GM12878 (cell line): ENCODE measurements at regions of chr1 and their contacts with region 1.

Region 1: GRCh38 chr1:52592637-52593323 is 9.4 kb upstream of the GPX7 start:
- DNase-seq: no peak
- ATAC-seq: no peak
- H3K4me3 ChIP-seq: no peak overlapping the region
- H3K27ac ChIP-seq: no peak overlapping the region
- H3K4me1 ChIP-seq: no peaks in the 10 kb centered on the region; the same call in 1 of the 2 replicates
- H3K27me3 ChIP-seq: no peaks in the 10 kb centered on the region; a peak in 2 of 4 replicates
- CTCF ChIP-seq: no peak
- EP300 ChIP-seq: no peak
- POLR2A ChIP-seq: no peak
- RAD21 ChIP-seq: no peak

Region 2: GRCh38 chr1:52334906-52335528 is 257.8 kb before region 1 on chr1:
- CTCF ChIA-PET with region 1: no interaction called
- POLR2A ChIA-PET with region 1: no interaction called
- RAD21 ChIA-PET with region 1: no interaction called
- SMC1A ChIA-PET with region 1: no interaction called
- in situ Hi-C with region 1: no loop called
- intact Hi-C with region 1: no loop called
- DNase-seq: no peak
- ATAC-seq: no peak
- H3K4me3 ChIP-seq: no peak overlapping the region
- H3K27ac ChIP-seq: no peak overlapping the region
- H3K4me1 ChIP-seq: no peaks in the 10 kb centered on the region
- H3K27me3 ChIP-seq: no peaks in the 10 kb centered on the region; a peak in 1 of 4 replicates
- CTCF ChIP-seq: no peak
- EP300 ChIP-seq: no peak
- POLR2A ChIP-seq: no peak
- RAD21 ChIP-seq: no peak

Region 3: DNA sequence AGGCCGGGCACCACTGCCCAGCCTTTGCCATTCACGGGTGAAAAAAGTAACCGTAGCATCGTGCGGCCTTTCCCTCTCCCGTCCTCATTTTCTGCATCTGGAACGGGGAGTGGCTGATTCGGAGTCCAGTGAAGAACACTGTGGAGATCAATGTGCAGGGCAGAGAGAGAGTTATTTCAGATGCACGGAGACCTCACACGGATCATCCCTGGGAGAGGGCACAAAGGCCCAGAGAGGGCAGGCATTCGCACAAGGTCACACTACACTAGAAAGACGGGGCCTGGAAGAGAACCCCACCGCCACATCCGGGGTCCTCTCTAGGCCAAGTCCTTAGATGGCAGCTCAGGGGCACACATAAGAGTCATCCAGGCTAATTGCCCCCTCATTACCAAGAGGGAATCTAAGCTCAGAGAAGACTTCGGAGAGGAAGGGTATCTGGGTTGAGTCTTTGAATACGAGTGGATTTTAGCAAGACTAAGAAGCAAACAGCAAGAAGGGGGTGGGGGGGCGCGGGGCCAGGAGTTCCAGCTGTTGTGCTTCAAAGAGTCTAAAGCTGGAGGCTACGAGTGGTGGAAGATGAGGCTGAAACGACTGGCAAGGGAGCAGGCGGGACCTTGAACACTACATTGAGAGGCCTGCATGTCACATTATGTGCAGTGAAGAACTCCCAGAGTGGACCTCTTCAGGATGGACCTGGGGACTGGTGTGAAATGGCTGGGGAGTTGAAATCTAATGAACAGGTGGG is 10.2 kb after region 1 on chr1:
- CTCF ChIA-PET with region 1: interaction called, 6 read pairs
- POLR2A ChIA-PET with region 1: interaction called, 5 read pairs
- RAD21 ChIA-PET with region 1: interaction called, 4 read pairs
- SMC1A ChIA-PET with region 1: interaction called, 13 read pairs
- in situ Hi-C with region 1: no loop called
- intact Hi-C with region 1: no loop called
- DNase-seq: no peak
- ATAC-seq: peak; percentile 25; the same call in 2 of the 3 replicates
- H3K4me3 ChIP-seq: peak overlapping the region; percentile 62; the same call in 1 of the 2 replicates
- H3K27ac ChIP-seq: peak overlapping the region; percentile 17
- H3K4me1 ChIP-seq: peaks cover 24% of the 10 kb centered on the region
- H3K27me3 ChIP-seq: peaks cover 1 to 4% of the 10 kb centered on the region in 2 experiments; a peak in 2 of 4 replicates
- CTCF ChIP-seq: no peak
- EP300 ChIP-seq: no peak
- POLR2A ChIP-seq: no peak
- RAD21 ChIP-seq: no peak